Vagina (tissue), 2 donors: ENCODE measurements at regions of chr4 and their contacts with region 1.

Region 1: GRCh38 chr4:54228056-54228527 is 1.0 kb upstream of the PDGFRA start:
- DNase-seq: peak in 1 of 2 donors; percentile 91
- H3K4me3 ChIP-seq: peak overlapping the region; percentile 37 to 65
- H3K27ac ChIP-seq: peak overlapping the region; percentile 81
- H3K4me1 ChIP-seq: peaks cover 58% of the 10 kb centered on the region
- H3K27me3 ChIP-seq: peaks cover 19% of the 10 kb centered on the region
- CTCF ChIP-seq: peak in 2 of 3 experiments; percentile 48 to 62
- POLR2A ChIP-seq: no peak

Region 2: DNA sequence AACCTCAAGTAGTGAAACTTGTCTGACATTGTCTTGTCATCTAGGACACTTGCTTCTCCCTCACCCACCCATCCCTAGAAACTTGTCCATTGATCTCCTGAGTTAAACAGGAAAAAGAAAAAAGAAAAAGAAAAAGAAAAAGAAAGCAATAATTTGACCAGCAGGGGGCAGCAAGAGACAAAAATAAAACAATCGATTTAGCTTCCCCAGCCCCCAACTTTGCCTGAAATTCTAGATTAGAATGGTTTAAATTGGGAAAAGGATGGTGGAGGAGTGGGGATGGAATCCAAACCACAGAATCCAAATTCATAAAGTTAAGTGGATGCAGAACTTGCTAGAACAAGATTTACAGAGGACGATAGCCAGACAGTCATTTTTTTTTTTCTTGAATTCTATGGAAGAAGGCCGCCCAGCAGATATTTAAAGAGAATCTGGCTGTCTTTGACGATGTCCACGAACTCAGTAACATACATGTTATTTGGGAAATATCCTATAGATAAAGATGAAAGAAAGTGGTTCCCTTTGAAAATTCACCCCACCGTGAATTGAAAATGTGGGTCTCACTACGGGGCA is 1851.9 kb before region 1 on chr4:
- intact Hi-C with region 1: loop called (anchors 10 kb)
- DNase-seq: no peak
- H3K4me3 ChIP-seq: no peak overlapping the region
- H3K27ac ChIP-seq: no peak overlapping the region
- H3K4me1 ChIP-seq: no peaks in the 10 kb centered on the region
- H3K27me3 ChIP-seq: no peaks in the 10 kb centered on the region
- CTCF ChIP-seq: peak in 2 of 3 experiments; percentile 55 to 56
- POLR2A ChIP-seq: no peak

Region 3: DNA sequence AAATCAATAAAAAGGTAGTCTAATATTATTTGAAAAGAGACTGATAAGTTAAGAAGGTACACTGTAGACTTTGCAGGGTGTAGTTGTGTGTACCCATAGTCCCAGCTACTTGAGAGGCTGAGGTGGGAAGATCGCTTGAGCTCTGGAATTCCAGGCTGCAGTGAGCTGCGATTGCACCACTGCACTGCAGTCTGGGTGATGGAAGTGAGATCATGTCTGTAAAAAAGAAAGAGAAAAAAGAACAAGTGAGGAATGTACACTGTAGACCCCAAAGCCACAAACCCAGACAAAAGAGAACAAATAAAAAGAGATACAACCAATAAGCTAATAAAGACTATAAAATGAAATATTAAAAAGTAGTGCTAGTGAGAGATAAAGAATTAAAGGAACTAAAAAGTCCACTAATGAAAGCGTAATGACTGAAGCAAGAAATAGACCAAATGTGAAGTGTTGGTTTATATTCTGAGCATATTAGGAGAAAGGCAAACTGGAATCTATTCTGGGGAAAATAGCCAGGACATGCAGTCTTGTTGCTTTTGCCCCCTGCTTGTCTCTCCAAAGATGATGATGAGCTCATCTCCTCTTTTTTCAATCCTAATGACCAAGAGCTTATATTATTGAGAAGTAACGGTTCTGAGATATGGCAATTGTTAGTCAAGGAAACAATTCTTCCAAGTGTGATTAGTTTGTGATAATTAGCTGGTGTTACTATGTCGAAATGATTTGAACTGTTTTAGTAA is 109.1 kb before region 1 on chr4:
- intact Hi-C with region 1: no loop called
- DNase-seq: no peak
- H3K4me3 ChIP-seq: no peak overlapping the region
- H3K27ac ChIP-seq: no peak overlapping the region
- H3K4me1 ChIP-seq: no peaks in the 10 kb centered on the region
- H3K27me3 ChIP-seq: no peaks in the 10 kb centered on the region
- CTCF ChIP-seq: no peak
- POLR2A ChIP-seq: no peak